ENCODE measurements at regions of chr7 and their contacts with region 1.

Region 1: GRCh38 chr7:31744294-31744874 is 57.4 kb downstream of the PPP1R17 start:
- DNase-seq: peak; percentile 33
- ATAC-seq: peak; percentile 89
- H3K4me3 ChIP-seq: no peak overlapping the region
- H3K27ac ChIP-seq: no peak overlapping the region
- H3K4me1 ChIP-seq: no peaks in the 10 kb centered on the region
- H3K27me3 ChIP-seq: no peaks in the 10 kb centered on the region
- CTCF ChIP-seq: peak; percentile 76 to 88 (median 83)
- EP300 ChIP-seq: no peak
- POLR2A ChIP-seq: no peak
- RAD21 ChIP-seq: peak; percentile 98

Region 2: DNA sequence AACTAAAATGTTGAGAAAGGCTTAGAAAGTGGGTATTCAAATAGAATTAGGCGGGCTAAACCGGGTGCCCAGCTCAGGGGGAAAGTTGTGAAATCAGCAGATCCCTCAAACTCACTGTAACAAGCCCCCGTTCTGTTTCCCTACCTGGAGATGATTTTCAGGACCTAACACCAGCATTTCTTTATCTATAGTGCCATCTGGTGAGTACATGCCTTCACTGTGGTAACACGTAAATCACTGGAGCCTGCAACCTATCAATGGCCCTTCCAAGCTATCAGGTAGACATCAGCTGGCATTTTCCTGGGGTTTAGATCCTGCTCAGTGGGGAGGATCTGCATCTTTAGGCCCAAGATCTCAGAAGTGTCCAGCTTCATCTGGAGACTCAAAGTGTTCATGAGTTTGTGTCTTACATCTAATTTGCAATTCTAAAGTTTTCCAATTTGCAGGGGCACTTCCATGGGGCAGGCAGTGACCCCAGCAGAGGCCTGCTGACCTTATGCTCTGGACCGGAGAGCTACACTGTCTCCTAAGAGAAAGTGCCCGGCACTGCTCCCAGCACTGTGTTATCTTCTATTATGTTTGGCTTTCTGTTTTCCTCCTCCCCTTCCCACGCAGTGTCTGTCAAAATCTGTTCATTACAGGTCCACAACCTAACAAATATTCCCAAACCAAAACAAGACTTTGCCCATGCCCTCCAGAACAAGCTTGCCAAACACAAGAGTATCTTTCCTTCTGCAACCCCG is 613.3 kb after region 1 on chr7:
- CTCF ChIA-PET with region 1: interaction called, 3 read pairs
- POLR2A ChIA-PET with region 1: no interaction called
- RAD21 ChIA-PET with region 1: no interaction called
- SMC1A ChIA-PET with region 1: interaction called, 3 read pairs
- in situ Hi-C with region 1: loop called (anchors 5 kb)
- intact Hi-C with region 1: no loop called
- DNase-seq: no peak
- ATAC-seq: peak; percentile 49
- H3K4me3 ChIP-seq: no peak overlapping the region
- H3K27ac ChIP-seq: no peak overlapping the region
- H3K4me1 ChIP-seq: no peaks in the 10 kb centered on the region
- H3K27me3 ChIP-seq: peaks cover 2% of the 10 kb centered on the region in 2 experiments; a peak in 1 of 4 replicates
- CTCF ChIP-seq: peak in 1 of 3 experiments; percentile 35; a peak in 1 of 6 replicates
- EP300 ChIP-seq: no peak
- POLR2A ChIP-seq: no peak
- RAD21 ChIP-seq: peak; percentile 42

Region 3: DNA sequence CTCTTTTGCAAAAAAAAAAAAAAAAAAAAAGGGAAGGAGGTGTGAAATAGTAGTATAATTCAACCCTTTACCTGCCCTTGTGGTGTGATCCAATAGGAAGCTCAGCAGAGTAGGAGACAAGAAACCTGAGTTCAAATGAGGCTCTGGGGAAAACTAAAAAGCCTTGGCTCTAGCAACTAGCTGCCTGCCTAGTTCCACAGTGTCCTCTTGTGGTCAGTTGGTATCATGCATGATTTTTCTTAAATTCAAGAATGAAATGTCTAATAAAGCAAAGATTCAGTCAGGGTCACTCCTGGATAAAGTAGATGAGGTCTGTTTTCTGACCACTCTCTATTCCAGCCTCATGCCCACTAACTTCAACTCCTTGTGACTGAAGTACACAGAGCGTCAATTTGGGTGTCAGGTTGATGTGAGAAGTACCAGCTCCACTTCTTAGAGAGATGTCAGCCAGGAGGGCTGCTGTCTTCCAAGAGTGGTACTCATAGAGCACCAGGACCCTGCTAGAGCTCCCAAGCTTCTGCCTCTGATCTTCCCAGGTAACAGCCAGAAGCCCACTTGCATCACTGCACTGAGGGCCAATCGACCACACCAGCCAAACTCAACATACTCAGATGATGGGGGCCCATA is 735.3 kb after region 1 on chr7:
- CTCF ChIA-PET with region 1: interaction called, 4 read pairs
- POLR2A ChIA-PET with region 1: no interaction called
- RAD21 ChIA-PET with region 1: no interaction called
- SMC1A ChIA-PET with region 1: no interaction called
- in situ Hi-C with region 1: loop called (anchors 10 kb)
- intact Hi-C with region 1: loop called (anchors 1 kb)
- DNase-seq: no peak
- ATAC-seq: peak; percentile 62
- H3K4me3 ChIP-seq: no peak overlapping the region
- H3K27ac ChIP-seq: no peak overlapping the region
- H3K4me1 ChIP-seq: no peaks in the 10 kb centered on the region
- H3K27me3 ChIP-seq: no peaks in the 10 kb centered on the region
- CTCF ChIP-seq: peak; percentile 75 to 78 (median 77)
- EP300 ChIP-seq: no peak
- POLR2A ChIP-seq: no peak
- RAD21 ChIP-seq: peak; percentile 82

Measured in GM12878 (cell line).